Panc1 (cell line): ENCODE measurements at regions of chr1 and their contacts with region 1.

Region 1: GRCh38 chr1:214660862-214661261 is 57.9 kb downstream of the CENPF start:
- DNase-seq: no peak
- ATAC-seq: peak; percentile 66
- H3K4me3 ChIP-seq: no peak overlapping the region
- H3K27ac ChIP-seq: no peak overlapping the region
- H3K4me1 ChIP-seq: no peaks in the 10 kb centered on the region
- H3K27me3 ChIP-seq: no peaks in the 10 kb centered on the region
- CTCF ChIP-seq: peak; percentile 48

Region 2: GRCh38 chr1:214566158-214567104 is 94.4 kb before region 1 on chr1:
- CTCF ChIA-PET with region 1: no interaction called
- POLR2A ChIA-PET with region 1: no interaction called
- in situ Hi-C with region 1: no loop called
- intact Hi-C with region 1: no loop called
- DNase-seq: no peak
- ATAC-seq: 0 out of 2 replicates have a peak, but pooled peaks have one; percentile 56
- H3K4me3 ChIP-seq: no peak overlapping the region
- H3K27ac ChIP-seq: peak overlapping the region; percentile 68
- H3K4me1 ChIP-seq: peaks cover 41% of the 10 kb centered on the region
- H3K27me3 ChIP-seq: no peaks in the 10 kb centered on the region
- CTCF ChIP-seq: no peak

Region 3: DNA sequence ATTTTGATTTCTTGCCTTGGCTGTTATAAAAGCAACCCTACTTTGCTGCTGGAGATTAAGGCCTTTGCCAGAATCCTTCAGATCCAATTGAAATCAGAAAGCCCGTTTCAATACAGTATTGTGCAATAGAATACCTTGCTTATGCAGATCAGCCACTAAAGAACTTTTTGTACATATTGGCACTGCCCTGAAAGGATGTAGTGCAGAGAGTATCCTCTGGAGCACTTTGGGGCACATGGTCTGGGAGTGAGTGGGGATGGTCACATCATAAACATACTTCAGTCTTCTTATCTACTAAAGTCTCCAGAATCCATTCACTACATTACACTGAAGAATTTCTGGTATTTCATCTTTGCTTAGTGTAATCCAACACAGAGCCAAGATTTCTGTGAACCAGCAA is 131.1 kb after region 1 on chr1:
- CTCF ChIA-PET with region 1: no interaction called
- POLR2A ChIA-PET with region 1: no interaction called
- in situ Hi-C with region 1: no loop called
- intact Hi-C with region 1: no loop called
- DNase-seq: no peak
- ATAC-seq: no peak
- H3K4me3 ChIP-seq: no peak overlapping the region
- H3K27ac ChIP-seq: no peak overlapping the region
- H3K4me1 ChIP-seq: no peaks in the 10 kb centered on the region
- H3K27me3 ChIP-seq: no peaks in the 10 kb centered on the region
- CTCF ChIP-seq: no peak

Region 4: GRCh38 chr1:214912127-214912526 is 251.3 kb after region 1 on chr1:
- CTCF ChIA-PET with region 1: no interaction called
- POLR2A ChIA-PET with region 1: no interaction called
- in situ Hi-C with region 1: no loop called
- intact Hi-C with region 1: no loop called
- DNase-seq: no peak
- ATAC-seq: no peak
- H3K4me3 ChIP-seq: no peak overlapping the region
- H3K27ac ChIP-seq: no peak overlapping the region
- H3K4me1 ChIP-seq: no peaks in the 10 kb centered on the region
- H3K27me3 ChIP-seq: no peaks in the 10 kb centered on the region
- CTCF ChIP-seq: no peak

Region 5: DNA sequence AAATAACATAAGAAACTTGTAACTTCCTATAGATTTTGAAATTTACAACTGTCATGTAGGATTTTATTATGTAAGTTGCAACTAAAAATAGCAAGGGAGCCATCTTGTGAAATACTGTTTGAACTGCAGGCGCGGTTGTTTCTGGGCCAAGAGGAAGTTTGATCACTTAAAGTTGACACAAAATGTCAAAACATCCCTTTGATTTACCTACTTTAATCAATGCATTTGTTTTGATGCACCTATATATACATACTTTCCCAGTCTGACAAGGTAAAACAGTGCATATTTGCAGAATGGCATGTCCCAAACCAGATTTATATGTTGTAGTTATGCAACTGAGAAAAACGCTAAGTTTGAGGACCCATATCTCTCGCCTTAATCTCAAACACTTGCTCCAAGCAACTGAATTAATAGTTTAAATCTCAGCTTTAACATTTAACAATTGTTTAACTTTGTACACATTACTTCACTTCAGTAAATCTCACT is 485.5 kb after region 1 on chr1:
- CTCF ChIA-PET with region 1: no interaction called
- POLR2A ChIA-PET with region 1: no interaction called
- in situ Hi-C with region 1: no loop called
- intact Hi-C with region 1: loop called (anchors 5 kb)
- DNase-seq: no peak
- ATAC-seq: no peak
- H3K4me3 ChIP-seq: no peak overlapping the region
- H3K27ac ChIP-seq: no peak overlapping the region
- H3K4me1 ChIP-seq: no peaks in the 10 kb centered on the region
- H3K27me3 ChIP-seq: no peaks in the 10 kb centered on the region
- CTCF ChIP-seq: peak; percentile 69; the same call in 1 of the 2 replicates